ENCODE measurements at regions of chr1 and their contacts with region 1.

Region 1: DNA sequence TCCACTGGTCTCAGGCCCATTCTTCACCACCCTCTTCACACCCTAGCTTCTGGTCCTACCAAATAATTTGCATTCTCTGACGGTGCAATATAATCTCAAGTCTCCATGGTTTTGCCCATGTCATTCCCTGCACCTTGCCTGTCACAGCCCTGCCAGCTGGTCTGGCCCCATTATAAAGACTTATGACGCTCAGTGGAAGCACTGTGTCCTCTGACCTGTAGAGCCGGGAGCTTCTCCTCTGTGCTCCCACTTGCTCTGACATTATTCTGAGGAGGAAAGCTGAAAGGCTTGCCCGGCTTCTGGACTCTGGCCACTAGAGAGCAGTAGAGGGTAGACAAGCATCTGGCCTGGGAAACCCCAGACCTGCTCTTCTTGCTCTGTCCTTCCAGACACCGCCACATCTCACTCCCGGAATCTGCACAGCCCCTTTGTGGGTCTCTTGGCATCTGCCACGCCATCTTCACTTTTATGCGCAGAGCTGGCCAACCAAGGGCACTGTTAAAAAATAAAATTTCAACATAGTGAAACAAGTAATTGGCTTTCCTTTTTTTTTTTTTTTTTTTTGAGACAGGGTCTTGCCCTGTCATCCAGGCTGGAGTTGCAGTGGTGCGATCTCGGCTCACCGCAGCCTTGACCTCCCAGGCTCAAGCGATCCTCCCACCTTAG is 44.4 kb downstream of the NENF start:
- DNase-seq: peak; percentile 85 to 92 (median 88)
- H3K4me3 ChIP-seq: no peak overlapping the region
- H3K27ac ChIP-seq: no peak overlapping the region
- H3K4me1 ChIP-seq: peaks cover 0 to 7% (median 0%) of the 10 kb centered on the region in 4 experiments
- H3K27me3 ChIP-seq: no peaks in the 10 kb centered on the region

Region 2: GRCh38 chr1:212463565-212464285 is 13.4 kb before region 1 on chr1:
- CTCF ChIA-PET with region 1: interaction called, 11 read pairs
- POLR2A ChIA-PET with region 1: interaction called, 4 read pairs
- DNase-seq: no peak
- H3K4me3 ChIP-seq: no peak overlapping the region
- H3K27ac ChIP-seq: no peak overlapping the region
- H3K4me1 ChIP-seq: peaks cover 0 to 1% (median under 1%) of the 10 kb centered on the region in 4 experiments
- H3K27me3 ChIP-seq: no peaks in the 10 kb centered on the region

Region 3: GRCh38 chr1:212488397-212489283 is 11.5 kb after region 1 on chr1:
- CTCF ChIA-PET with region 1: interaction called, 25 read pairs
- POLR2A ChIA-PET with region 1: no interaction called
- DNase-seq: peak; percentile 22 to 83 (median 82)
- H3K4me3 ChIP-seq: no peak overlapping the region
- H3K27ac ChIP-seq: no peak overlapping the region
- H3K4me1 ChIP-seq: peaks cover 0 to 13% (median 1%) of the 10 kb centered on the region in 4 experiments
- H3K27me3 ChIP-seq: no peaks in the 10 kb centered on the region

Region 4: GRCh38 chr1:212566522-212567479 is 89.7 kb after region 1 on chr1:
- CTCF ChIA-PET with region 1: interaction called, 10 read pairs
- POLR2A ChIA-PET with region 1: no interaction called
- DNase-seq: peak; percentile 72 to 94 (median 92)
- H3K4me3 ChIP-seq: peak overlapping the region; percentile 27 to 90 (median 76)
- H3K27ac ChIP-seq: peak overlapping the region in 1 of 2 experiments; percentile 56
- H3K4me1 ChIP-seq: peaks cover 3 to 17% (median 8%) of the 10 kb centered on the region in 4 experiments
- H3K27me3 ChIP-seq: no peaks in the 10 kb centered on the region

Region 5: GRCh38 chr1:212630158-212630900 is 153.2 kb after region 1 on chr1:
- CTCF ChIA-PET with region 1: interaction called, 17 read pairs
- POLR2A ChIA-PET with region 1: no interaction called
- DNase-seq: peak; percentile 93 to 98 (median 97)
- H3K4me3 ChIP-seq: no peak overlapping the region
- H3K27ac ChIP-seq: no peak overlapping the region
- H3K4me1 ChIP-seq: peaks cover 15 to 40% (median 30%) of the 10 kb centered on the region in 4 experiments
- H3K27me3 ChIP-seq: no peaks in the 10 kb centered on the region

Measured in common myeloid progenitor, CD34-positive (primary cell).